ENCODE measurements at regions of chr3 and their contacts with region 1.

Region 1: GRCh38 chr3:5187156-5187919 is at the start of gene EDEM1:
- DNase-seq: peak; percentile 57
- ATAC-seq: peak; percentile 97
- H3K4me3 ChIP-seq: peak within 1 kb of the TSS; percentile 81 to 82
- H3K27ac ChIP-seq: peak within 1 kb of the TSS; percentile 88
- H3K4me1 ChIP-seq: peaks cover 14% of the 10 kb centered on the region; the same call in 1 of the 2 replicates
- H3K27me3 ChIP-seq: no peaks in the 10 kb centered on the region
- CTCF ChIP-seq: no peak
- total RNA-seq, gene EDEM1: 44.6 TPM

Region 2: GRCh38 chr3:5006755-5007202 is 180.6 kb before region 1 on chr3:
- CTCF ChIA-PET with region 1: no interaction called
- POLR2A ChIA-PET with region 1: no interaction called
- in situ Hi-C with region 1: no loop called
- intact Hi-C with region 1: no loop called
- DNase-seq: no peak
- ATAC-seq: no peak
- H3K4me3 ChIP-seq: no peak overlapping the region
- H3K27ac ChIP-seq: no peak overlapping the region
- H3K4me1 ChIP-seq: peaks cover 5% of the 10 kb centered on the region
- H3K27me3 ChIP-seq: no peaks in the 10 kb centered on the region
- CTCF ChIP-seq: no peak

Region 3: DNA sequence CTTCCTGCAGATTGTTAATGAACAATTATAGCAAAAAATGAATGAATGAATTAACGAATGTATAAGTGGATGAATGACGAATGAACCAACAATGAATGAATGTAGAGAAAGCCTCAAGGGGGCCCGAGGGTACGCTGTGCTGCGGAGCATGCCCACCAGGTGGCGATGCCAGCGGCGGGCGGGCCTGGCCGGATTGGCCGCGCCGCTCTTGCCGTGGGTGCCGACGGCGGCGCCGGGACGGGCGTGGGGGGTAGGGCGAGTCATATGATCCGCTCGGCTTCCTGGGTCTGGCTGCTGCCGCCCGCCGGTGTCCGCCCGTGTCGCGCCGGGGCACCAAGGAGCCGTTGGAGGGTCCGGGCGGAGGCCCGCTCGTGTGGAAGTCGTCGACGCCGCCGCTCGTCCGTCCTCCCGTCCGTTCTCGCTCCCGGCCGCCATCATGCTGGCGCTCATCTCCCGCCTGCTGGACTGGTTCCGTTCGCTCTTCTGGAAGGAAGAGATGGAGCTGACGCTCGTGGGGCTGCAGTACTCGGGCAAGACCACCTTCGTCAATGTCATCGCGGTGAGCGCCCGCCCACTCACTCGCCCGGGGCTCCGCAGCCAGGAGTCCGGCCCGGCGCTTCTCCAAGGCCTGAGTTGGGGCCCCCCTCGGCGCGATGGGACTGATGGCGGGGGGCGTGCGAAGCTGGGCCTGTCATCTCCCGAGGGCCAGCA is 65.2 kb before region 1 on chr3 and contains the start of gene ARL8B:
- CTCF ChIA-PET with region 1: interaction called, 3 read pairs
- POLR2A ChIA-PET with region 1: no interaction called
- in situ Hi-C with region 1: no loop called
- intact Hi-C with region 1: loop called (anchors 10 kb)
- DNase-seq: no peak
- ATAC-seq: peak; percentile 98
- H3K4me3 ChIP-seq: peak within 1 kb of the TSS; percentile 92 to 95
- H3K27ac ChIP-seq: peak within 1 kb of the TSS; percentile 88
- H3K4me1 ChIP-seq: peaks cover 6% of the 10 kb centered on the region; the same call in 1 of the 2 replicates
- H3K27me3 ChIP-seq: no peaks in the 10 kb centered on the region
- CTCF ChIP-seq: peak; percentile 96
- total RNA-seq, gene ARL8B: 51.8 TPM

Measured in Panc1 (cell line).